ENCODE measurements at regions of chr16 and their contacts with region 1.

Region 1: DNA sequence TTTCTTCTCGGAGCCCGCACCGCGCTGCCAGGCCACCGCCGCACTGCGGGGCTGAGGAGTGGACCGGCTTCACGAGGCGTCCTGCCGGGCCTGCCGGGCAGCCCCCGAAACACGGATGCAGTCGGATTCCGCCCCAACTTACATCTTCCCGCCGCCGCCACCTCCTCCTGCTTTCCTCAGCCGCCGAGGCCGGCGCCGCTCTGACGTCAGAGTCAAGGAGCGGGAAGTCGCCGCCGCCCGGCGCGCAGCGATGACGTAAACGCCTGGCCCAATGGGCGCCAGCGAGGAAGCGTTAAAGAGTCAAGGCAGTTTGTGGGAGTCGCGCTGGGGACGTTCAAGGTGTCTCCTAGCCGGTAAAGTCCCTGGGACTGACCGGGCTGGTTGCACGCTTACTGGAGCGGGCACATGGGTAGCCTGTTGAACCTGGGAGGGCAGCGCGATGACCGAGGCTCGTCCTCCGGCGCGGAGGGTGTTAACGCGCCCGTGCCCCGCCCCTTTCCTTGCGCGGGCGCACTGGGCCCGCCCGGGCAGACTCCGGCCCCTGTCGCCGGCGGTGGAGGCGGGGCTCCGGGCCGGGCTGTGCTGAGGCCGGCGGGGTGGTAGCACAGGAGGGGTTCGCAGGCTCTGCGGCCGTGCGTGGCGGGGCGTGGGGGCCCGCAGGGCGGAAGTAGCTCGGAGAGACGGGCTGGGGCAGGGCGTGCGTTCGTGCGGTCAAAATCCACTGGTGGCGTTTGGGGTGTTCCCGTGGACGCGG is at the start of gene RNPS1:
- DNase-seq: peak; percentile 91 to 99 (median 94)

Region 2: GRCh38 chr16:2071454-2072202 is 196.5 kb before region 1 on chr16:
- intact Hi-C with region 1: no loop called
- DNase-seq: no peak

Region 3: GRCh38 chr16:2205104-2205966 is 62.8 kb before region 1 on chr16 and contains the start of gene MLST8:
- intact Hi-C with region 1: loop called (anchors 1 kb)
- DNase-seq: peak; percentile 75 to 97 (median 84)